Activated CD4-positive, alpha-beta T cell treated with anti-CD3 and anti-CD28 coated beads for 36 hours (primary cell): ENCODE measurements at regions of chr6 and their contacts with region 1.

Region 1: GRCh38 chr6:138588805-138589434 is 89.6 kb upstream of the NHSL1 start:
- DNase-seq: peak; percentile 67
- ATAC-seq: peak; percentile 11
- H3K4me3 Mint-ChIP-seq: no peak overlapping the region
- H3K27ac Mint-ChIP-seq: no peak overlapping the region
- H3K4me1 Mint-ChIP-seq: peaks cover 28% of the 10 kb centered on the region
- H3K27me3 Mint-ChIP-seq: no peaks in the 10 kb centered on the region

Region 2: DNA sequence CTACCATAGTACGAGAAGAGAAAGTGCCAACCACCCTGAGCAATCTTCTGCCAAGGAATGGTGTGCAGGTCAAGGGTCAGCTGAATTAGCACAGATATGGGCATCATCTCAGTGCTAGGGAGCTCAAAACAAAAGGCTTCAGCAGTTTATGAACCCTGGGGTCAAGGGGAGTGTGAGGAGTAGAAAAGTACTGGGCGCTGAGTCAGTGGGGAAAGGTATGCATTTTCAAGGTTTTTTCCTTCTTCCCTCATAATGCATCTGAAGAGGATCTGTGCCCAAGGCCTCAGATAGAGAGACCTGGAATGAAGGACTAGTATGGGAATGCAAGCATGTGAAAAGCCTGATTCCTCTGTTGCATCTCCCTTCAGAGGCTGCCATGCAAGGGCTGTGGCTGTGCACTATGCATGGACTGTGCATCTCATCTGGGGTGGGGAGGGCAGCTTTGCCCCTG is 563.4 kb before region 1 on chr6:
- CTCF ChIA-PET with region 1: no interaction called
- POLR2A ChIA-PET with region 1: no interaction called
- intact Hi-C with region 1: no loop called
- DNase-seq: no peak
- ATAC-seq: no peak
- H3K4me3 Mint-ChIP-seq: no peak overlapping the region
- H3K27ac Mint-ChIP-seq: no peak overlapping the region
- H3K4me1 Mint-ChIP-seq: no peaks in the 10 kb centered on the region
- H3K27me3 Mint-ChIP-seq: peaks cover 2% of the 10 kb centered on the region

Region 3: GRCh38 chr6:138258991-138259390 is 329.9 kb before region 1 on chr6:
- CTCF ChIA-PET with region 1: no interaction called
- POLR2A ChIA-PET with region 1: no interaction called
- intact Hi-C with region 1: no loop called
- DNase-seq: no peak
- ATAC-seq: no peak
- H3K4me3 Mint-ChIP-seq: no peak overlapping the region
- H3K27ac Mint-ChIP-seq: no peak overlapping the region
- H3K4me1 Mint-ChIP-seq: no peaks in the 10 kb centered on the region
- H3K27me3 Mint-ChIP-seq: peaks cover 3% of the 10 kb centered on the region

Region 4: GRCh38 chr6:138349891-138350290 is 239.0 kb before region 1 on chr6:
- CTCF ChIA-PET with region 1: no interaction called
- POLR2A ChIA-PET with region 1: no interaction called
- intact Hi-C with region 1: no loop called
- DNase-seq: no peak
- ATAC-seq: no peak
- H3K4me3 Mint-ChIP-seq: no peak overlapping the region
- H3K27ac Mint-ChIP-seq: no peak overlapping the region
- H3K4me1 Mint-ChIP-seq: no peaks in the 10 kb centered on the region
- H3K27me3 Mint-ChIP-seq: peaks cover 11% of the 10 kb centered on the region

Region 5: DNA sequence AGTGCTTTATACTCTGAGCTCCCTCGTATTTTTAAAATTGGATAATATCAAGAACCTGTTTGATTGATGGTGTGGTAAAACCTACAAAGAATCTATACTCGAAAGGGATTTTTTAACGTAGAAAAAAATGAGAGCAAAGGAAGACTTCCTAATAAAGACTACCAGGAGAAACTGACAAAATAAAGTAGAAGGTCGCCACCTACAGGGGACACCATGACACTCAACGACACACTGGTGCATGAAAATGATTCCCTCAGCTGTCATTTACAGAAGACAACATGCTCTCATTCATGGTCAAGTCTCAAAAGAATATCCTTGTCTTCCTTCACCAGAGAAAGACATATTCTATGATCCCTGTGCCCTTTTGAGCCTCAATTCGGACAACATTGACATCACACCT is 79.5 kb before region 1 on chr6:
- CTCF ChIA-PET with region 1: no interaction called
- POLR2A ChIA-PET with region 1: no interaction called
- intact Hi-C with region 1: no loop called
- DNase-seq: peak; percentile 66
- ATAC-seq: peak; percentile 60
- H3K4me3 Mint-ChIP-seq: no peak overlapping the region
- H3K27ac Mint-ChIP-seq: no peak overlapping the region
- H3K4me1 Mint-ChIP-seq: peaks cover 2% of the 10 kb centered on the region
- H3K27me3 Mint-ChIP-seq: no peaks in the 10 kb centered on the region

Region 6: GRCh38 chr6:138572167-138572865 is 16.6 kb before region 1 on chr6:
- CTCF ChIA-PET with region 1: interaction called, 10 read pairs
- POLR2A ChIA-PET with region 1: no interaction called
- intact Hi-C with region 1: no loop called
- DNase-seq: peak; percentile 40
- ATAC-seq: peak; percentile 68
- H3K4me3 Mint-ChIP-seq: no peak overlapping the region
- H3K27ac Mint-ChIP-seq: no peak overlapping the region
- H3K4me1 Mint-ChIP-seq: peaks cover 4% of the 10 kb centered on the region
- H3K27me3 Mint-ChIP-seq: peaks cover 8% of the 10 kb centered on the region

Region 7: DNA sequence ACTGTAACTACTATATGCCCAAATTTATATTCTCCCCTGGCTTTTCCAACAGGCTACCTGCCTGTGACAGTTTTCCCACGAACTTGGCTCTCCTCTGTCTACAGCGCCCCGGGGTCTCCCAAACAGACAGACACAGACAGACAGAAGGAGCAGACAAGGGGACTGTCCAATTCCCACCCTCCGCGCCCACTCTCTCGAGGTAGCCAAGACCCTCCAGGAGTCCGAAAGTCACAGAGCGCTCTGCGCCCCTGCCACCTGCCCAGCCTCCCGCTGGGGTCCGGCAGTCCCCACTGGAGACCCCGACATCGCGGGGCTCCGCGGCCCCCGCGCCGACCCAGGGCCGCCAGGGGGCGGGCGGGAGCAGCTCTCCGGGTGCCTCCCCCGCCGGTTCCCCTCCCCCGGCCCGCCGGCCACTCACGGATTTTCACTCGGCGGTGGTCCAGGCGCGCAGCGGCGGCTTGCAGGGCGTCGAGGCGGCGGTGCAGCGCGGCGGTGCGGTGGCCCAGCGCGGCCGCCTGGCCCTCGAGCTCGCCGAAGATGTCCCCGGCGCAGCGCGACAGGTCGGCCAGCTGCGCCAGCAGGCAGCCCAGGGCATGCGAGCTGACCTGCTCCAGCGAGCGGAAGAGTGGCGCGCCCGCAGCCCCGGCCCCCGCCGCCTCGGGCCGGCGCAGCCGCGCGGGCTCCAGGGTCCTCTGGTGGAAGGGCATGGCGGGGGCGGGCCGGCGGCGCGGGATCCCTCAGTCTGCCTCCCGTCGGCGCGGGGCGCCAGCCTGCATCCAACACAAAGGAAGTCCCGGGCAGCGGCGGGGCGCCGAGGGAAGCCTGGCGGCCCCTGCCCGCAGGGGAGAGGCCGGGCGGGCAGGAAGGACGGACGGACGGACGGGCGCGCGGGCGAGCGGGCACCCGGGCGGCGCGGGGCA is 103.4 kb after region 1 on chr6:
- CTCF ChIA-PET with region 1: interaction called, 5 read pairs
- POLR2A ChIA-PET with region 1: no interaction called
- intact Hi-C with region 1: loop called (anchors 1 to 2 kb)
- DNase-seq: peak; percentile 74
- ATAC-seq: peak; percentile 63
- H3K4me3 Mint-ChIP-seq: peak overlapping the region; percentile 68
- H3K27ac Mint-ChIP-seq: no peak overlapping the region
- H3K4me1 Mint-ChIP-seq: peaks cover 10% of the 10 kb centered on the region
- H3K27me3 Mint-ChIP-seq: peaks cover 29% of the 10 kb centered on the region

Region 8: DNA sequence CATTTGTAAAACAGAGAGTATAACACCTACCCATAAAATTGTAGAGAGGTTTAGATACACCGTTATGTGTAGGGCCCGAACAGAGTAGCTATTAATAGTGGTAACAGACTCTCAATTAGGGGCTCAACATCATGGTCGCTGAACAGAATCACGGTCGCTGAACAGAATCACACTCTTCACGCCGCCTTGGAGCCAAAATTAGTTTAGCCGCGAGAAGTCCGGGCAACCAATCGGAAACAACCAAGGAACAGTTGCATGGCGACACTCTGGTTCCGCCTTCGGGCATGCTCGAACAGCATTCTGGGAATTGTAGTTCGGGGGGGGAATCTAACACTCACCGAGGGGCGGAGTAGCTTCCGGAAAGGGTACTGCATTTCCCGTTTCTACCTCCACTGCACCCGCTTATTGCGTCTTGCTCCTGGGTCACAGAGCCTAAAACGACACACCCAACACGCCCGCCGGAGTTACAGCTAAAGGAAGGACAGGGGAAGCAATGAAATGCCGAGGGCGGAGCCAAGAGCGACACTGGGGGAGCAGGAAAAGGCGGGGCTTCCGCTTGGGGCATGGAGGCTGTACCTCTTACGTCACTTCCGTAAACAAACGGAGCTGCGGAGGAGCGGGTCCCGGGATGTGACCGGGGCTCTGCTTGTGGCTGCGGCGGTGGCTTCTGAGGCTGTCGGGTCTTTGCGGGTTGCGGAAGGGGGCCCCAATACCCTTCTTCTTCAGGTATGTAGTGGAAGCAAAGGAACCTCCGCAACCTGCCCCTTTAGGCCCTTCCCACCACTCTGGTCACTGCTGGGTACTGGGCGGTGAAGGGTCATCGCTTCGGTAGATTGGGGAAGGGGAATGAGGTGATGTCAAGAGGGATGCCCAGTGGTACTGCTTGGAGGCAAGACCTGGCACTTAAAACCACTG is 184.5 kb after region 1 on chr6 and contains the start of gene CCDC28A:
- CTCF ChIA-PET with region 1: interaction called, 12 read pairs
- POLR2A ChIA-PET with region 1: no interaction called
- intact Hi-C with region 1: loop called (anchors 1 to 2 kb)
- DNase-seq: peak; percentile 95
- ATAC-seq: peak; percentile 91
- H3K4me3 Mint-ChIP-seq: peak within 1 kb of the TSS; percentile 84
- H3K27ac Mint-ChIP-seq: peak within 1 kb of the TSS; percentile 98
- H3K4me1 Mint-ChIP-seq: peaks cover 31% of the 10 kb centered on the region
- H3K27me3 Mint-ChIP-seq: no peaks in the 10 kb centered on the region
- total RNA-seq, gene CCDC28A: 14.8 to 16.8 TPM

Region 9: DNA sequence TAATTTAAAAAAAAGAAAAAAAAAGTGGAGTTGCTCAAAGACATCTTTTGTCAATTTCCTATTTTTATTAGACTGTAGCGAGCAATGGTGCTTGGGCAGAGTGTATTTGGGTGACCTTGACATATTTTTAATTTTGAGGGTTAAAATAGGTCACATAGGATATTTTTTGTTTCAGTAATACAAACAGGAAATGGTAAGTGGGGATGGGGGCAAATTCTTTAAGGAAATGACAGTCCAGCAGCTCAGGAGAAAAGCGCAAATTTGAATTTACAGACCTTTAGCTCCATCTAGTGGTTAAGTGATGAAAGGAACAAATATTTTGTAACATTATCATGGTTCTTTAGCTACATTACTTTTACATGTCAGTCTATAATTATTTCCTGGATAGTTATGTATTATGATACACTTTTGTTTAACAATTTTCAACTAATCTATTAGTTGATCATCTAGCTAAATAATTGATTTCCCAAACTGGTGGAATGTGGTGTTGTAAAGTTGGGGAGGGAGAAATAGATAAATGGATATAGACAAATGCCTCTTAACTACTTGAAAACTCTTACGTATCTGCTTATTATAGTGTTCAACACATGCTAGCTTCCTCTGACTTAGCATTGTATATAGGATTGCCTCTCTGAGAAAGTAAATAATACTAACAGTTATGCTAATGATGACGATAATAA is 775.5 kb after region 1 on chr6:
- CTCF ChIA-PET with region 1: interaction called, 4 read pairs
- POLR2A ChIA-PET with region 1: no interaction called
- intact Hi-C with region 1: loop called in 1 of 2 experiments (anchors 2 kb)
- DNase-seq: no peak
- ATAC-seq: peak; percentile 57
- H3K4me3 Mint-ChIP-seq: no peak overlapping the region
- H3K27ac Mint-ChIP-seq: no peak overlapping the region
- H3K4me1 Mint-ChIP-seq: peaks cover 25% of the 10 kb centered on the region
- H3K27me3 Mint-ChIP-seq: no peaks in the 10 kb centered on the region